Heart left ventricle (tissue), 16 donors: ENCODE measurements at regions of chrX and their contacts with region 1.

Region 1: GRCh38 chrX:18390941-18391538 is 34.4 kb upstream of the CDKL5 start:
- DNase-seq: peak; percentile 24 to 72 (median 39)
- ATAC-seq: no peak
- H3K4me3 ChIP-seq: no peak overlapping the region
- H3K27ac ChIP-seq: no peak overlapping the region
- H3K4me1 ChIP-seq: no peaks in the 10 kb centered on the region
- H3K27me3 ChIP-seq: no peaks in the 10 kb centered on the region
- CTCF ChIP-seq: peak; percentile 56 to 92 (median 66)
- POLR2A ChIP-seq: no peak

Region 2: GRCh38 chrX:18899796-18900447 is 508.9 kb after region 1 on chrX:
- intact Hi-C with region 1: loop called in 8 of 10 experiments (anchors 5 to 10 kb)
- DNase-seq: no peak
- ATAC-seq: no peak
- H3K4me3 ChIP-seq: no peak overlapping the region
- H3K27ac ChIP-seq: no peak overlapping the region
- H3K4me1 ChIP-seq: peaks cover 0 to 12% (median under 1%) of the 10 kb centered on the region in 12 donors
- H3K27me3 ChIP-seq: no peaks in the 10 kb centered on the region
- CTCF ChIP-seq: peak in 10 of 12 donors; percentile 14 to 55 (median 38)
- POLR2A ChIP-seq: no peak

Region 3: DNA sequence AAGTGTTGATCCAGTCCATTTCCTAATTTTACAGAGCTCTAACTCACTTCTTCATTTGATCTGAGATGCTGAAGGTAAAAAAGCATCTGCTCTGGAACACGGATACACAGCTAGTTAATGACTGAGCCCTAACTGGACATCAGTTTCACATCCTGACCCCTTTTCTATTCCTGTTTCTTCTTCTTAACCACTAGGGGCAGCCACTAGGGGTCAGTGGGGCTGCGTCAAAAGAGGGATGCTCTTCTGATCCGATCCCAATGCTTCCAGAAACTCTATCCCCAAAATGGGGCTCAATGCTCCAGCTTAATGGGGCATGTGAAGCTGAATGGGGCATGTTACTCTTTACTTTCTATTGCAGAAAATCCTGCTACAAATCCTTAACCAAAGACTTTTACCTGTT is 626.2 kb after region 1 on chrX:
- intact Hi-C with region 1: loop called in 2 of 10 experiments (anchors 10 kb)
- DNase-seq: no peak
- ATAC-seq: peak in 1 of 4 donors; percentile 61
- H3K4me3 ChIP-seq: no peak overlapping the region
- H3K27ac ChIP-seq: no peak overlapping the region
- H3K4me1 ChIP-seq: no peaks in the 10 kb centered on the region
- H3K27me3 ChIP-seq: peaks cover 0 to 5% (median 0%) of the 10 kb centered on the region in 9 donors
- CTCF ChIP-seq: peak in 11 of 12 donors; percentile 19 to 49 (median 40)
- POLR2A ChIP-seq: no peak